Caco-2 (cell line): ENCODE measurements at regions of chr12 and their contacts with region 1.

Region 1: GRCh38 chr12:97716356-97716755 is 253.8 kb downstream of the RMST start:
- DNase-seq: peak; percentile 33 to 38
- H3K4me3 ChIP-seq: no peak overlapping the region
- H3K4me3 Mint-ChIP-seq: no peak overlapping the region
- H3K27ac Mint-ChIP-seq: no peak overlapping the region
- H3K4me1 ChIP-seq: peaks cover 18% of the 10 kb centered on the region
- H3K4me1 Mint-ChIP-seq: peaks cover 21% of the 10 kb centered on the region
- H3K27me3 ChIP-seq: no peaks in the 10 kb centered on the region
- H3K27me3 Mint-ChIP-seq: no peaks in the 10 kb centered on the region
- CTCF ChIP-seq: peak; percentile 47 to 61

Region 2: GRCh38 chr12:97745406-97746101 is 29.2 kb after region 1 on chr12:
- CTCF ChIA-PET with region 1: no interaction called
- POLR2A ChIA-PET with region 1: no interaction called
- intact Hi-C with region 1: no loop called
- DNase-seq: no peak
- H3K4me3 ChIP-seq: no peak overlapping the region
- H3K4me3 Mint-ChIP-seq: no peak overlapping the region
- H3K27ac Mint-ChIP-seq: no peak overlapping the region
- H3K4me1 ChIP-seq: no peaks in the 10 kb centered on the region
- H3K4me1 Mint-ChIP-seq: no peaks in the 10 kb centered on the region
- H3K27me3 ChIP-seq: no peaks in the 10 kb centered on the region
- H3K27me3 Mint-ChIP-seq: no peaks in the 10 kb centered on the region
- CTCF ChIP-seq: no peak

Region 3: DNA sequence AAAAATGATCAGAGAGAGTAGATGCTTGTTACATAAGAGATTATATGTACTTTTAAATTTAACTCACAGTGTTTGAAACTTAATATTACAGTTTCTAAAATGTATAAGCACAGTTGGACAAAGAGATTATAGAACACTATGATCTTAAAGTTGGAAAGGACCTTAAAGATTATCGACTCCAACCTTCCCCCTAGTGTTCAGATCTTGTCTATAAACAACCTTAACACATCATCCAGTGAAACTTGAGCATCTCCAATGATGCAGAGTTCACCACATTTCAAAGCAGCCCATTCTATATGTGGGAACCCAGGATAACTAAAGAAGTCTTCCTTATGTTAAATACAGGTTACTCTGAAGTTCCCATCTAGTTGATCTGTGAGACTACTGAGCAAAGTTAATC is 227.0 kb after region 1 on chr12:
- CTCF ChIA-PET with region 1: no interaction called
- POLR2A ChIA-PET with region 1: no interaction called
- intact Hi-C with region 1: loop called (anchors 1 kb)
- DNase-seq: no peak
- H3K4me3 ChIP-seq: no peak overlapping the region
- H3K4me3 Mint-ChIP-seq: no peak overlapping the region
- H3K27ac Mint-ChIP-seq: no peak overlapping the region
- H3K4me1 ChIP-seq: peaks cover 16% of the 10 kb centered on the region
- H3K4me1 Mint-ChIP-seq: peaks cover 27% of the 10 kb centered on the region
- H3K27me3 ChIP-seq: no peaks in the 10 kb centered on the region
- H3K27me3 Mint-ChIP-seq: no peaks in the 10 kb centered on the region
- CTCF ChIP-seq: peak in 1 of 2 experiments; percentile 27

Region 4: DNA sequence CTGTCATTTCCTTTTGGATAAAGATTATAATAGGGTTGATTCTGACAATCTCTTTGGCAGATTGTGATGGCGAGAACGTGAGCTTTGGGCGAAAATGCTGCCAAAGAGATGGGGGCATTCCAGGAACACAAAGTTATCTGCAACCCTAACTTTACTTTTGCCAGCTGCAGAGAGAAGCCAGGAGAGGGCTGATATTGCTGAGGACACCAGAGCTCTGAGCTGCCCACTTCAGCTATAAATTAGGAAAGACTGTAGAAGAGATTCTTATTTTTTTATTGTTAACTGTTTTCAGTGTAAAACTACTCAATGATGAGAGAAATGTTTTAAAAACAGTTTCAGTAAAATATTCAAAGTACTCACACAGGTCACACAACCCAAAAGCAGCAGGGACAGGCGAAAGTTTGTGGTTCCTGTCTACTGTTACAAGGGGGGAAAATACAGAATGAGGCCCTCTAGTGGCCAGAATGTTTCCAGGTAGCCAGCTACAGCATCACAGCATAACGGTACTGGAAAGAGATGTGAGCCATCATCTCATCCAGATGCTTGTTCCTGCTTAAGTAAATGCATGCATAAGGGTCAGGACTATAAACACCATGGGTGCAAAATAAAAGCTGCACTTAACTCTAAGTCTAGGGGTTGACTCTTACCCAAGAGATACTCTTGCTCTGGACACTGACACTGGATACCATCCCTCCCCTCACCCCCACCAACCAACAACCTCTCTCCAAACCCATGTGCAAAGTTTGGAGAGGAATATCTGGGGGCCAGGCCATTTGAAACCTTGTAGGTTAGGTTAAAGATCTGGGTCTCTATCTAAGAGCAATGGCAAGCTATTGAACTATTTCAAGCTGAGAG is 244.6 kb after region 1 on chr12:
- CTCF ChIA-PET with region 1: no interaction called
- POLR2A ChIA-PET with region 1: no interaction called
- intact Hi-C with region 1: loop called (anchors 5 kb)
- DNase-seq: peak in 1 of 2 experiments; percentile 43
- H3K4me3 ChIP-seq: no peak overlapping the region
- H3K4me3 Mint-ChIP-seq: no peak overlapping the region
- H3K27ac Mint-ChIP-seq: no peak overlapping the region
- H3K4me1 ChIP-seq: no peaks in the 10 kb centered on the region
- H3K4me1 Mint-ChIP-seq: no peaks in the 10 kb centered on the region
- H3K27me3 ChIP-seq: no peaks in the 10 kb centered on the region
- H3K27me3 Mint-ChIP-seq: no peaks in the 10 kb centered on the region
- CTCF ChIP-seq: peak; percentile 54 to 72